ENCODE measurements at regions of chr17 and their contacts with region 1.

Region 1: DNA sequence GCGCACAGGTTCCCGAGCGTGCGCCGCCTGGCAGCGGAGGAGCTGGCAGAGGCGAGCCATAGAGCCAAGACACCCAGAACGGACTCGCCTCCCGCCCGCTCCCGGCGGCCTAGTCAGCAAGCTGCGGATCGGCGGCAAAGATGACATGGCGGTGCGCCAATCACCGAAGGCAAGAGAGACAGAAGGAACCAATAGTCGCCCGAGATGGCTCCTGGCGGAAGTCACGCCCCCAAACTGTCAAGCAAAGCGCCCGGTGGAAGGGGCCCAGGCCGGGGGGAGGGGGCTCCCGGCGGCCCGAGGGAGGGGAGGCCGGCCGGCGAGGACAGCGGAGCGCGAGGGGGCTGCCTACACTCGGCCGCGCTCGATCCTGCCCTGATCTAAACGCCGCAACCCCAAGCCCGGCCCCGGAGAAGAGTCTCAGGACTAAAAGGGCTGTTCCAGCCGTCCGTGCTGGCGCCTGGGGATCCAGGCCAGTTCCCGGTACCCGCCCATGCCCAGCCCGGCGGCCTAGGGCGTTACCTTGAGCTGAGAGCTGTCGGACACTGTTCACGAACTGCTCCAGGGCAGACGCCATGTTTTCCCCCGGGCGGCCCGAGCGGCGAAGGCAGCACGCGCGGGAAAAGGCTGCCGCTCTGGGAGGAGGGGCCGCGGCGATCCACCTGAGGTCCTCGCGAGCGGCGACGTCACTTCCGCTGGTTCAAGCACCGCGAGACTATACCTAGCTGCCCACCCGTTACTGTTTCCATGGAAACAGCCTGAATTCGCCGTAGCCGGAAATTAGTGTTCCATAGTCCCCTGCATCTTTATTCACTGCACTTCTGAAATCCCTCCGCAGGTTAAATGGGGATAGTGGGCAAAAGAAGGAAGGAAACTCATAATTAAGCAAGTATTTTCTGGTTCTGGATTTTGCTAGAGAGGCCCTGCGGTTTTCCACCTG is at the start of gene COPS3:
- DNase-seq: peak; percentile 98 to 100 (median 99)

Region 2: GRCh38 chr17:17237026-17237799 is 43.7 kb before region 1 on chr17 and contains the start of gene FLCN:
- intact Hi-C with region 1: loop called (anchors 2 kb)
- DNase-seq: peak; percentile 93 to 99 (median 96)